SK-N-SH (cell line): ENCODE measurements at regions of chr7 and their contacts with region 1.

Region 1: DNA sequence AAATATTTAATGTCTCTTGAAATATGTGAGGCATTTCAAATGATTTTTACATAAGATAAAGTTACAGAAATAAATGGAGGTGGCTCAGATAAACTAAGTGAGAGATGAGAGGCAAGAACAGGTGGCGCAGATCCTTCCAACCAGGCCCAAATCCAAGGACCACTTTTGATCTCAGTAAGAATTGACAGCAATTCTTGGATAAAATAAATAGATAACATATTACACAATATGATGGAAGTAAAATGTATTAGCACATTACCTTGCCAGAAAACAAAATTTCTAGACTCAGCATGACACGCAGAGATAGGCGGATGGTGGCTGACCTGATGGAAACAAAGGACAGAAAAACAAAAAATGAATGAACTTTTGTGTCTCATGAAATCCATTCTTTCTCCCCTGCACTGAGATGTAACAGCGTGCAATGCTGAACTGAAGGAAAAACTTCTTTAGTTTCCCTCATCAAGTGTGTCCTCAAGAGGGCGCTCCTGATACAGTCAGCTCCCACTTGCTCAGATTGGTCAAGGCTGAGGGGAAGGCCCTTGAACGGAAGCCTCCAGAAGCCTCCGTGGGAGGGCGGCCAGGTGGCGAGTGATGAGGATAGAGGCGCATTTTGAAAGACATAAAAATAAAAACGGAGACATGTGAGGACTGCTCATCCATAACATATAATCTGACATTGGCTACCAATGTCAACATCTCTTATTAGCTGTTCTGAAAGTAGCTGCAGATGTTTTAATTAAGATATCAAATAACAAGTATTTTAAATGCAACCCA is 62.8 kb upstream of the GSDME start:
- DNase-seq: peak; percentile 77
- H3K4me3 ChIP-seq: no peak overlapping the region
- H3K27ac ChIP-seq: peak overlapping the region; percentile 70 to 93; a peak in 3 of 4 replicates
- H3K4me1 ChIP-seq: peaks cover 5 to 18% of the 10 kb centered on the region in 2 experiments; a peak in 3 of 4 replicates
- H3K27me3 ChIP-seq: no peaks in the 10 kb centered on the region
- CTCF ChIP-seq: peak; percentile 99
- EP300 ChIP-seq: peak in 1 of 2 experiments; percentile 19; a peak in 1 of 4 replicates
- RAD21 ChIP-seq: peak; percentile 98

Region 2: DNA sequence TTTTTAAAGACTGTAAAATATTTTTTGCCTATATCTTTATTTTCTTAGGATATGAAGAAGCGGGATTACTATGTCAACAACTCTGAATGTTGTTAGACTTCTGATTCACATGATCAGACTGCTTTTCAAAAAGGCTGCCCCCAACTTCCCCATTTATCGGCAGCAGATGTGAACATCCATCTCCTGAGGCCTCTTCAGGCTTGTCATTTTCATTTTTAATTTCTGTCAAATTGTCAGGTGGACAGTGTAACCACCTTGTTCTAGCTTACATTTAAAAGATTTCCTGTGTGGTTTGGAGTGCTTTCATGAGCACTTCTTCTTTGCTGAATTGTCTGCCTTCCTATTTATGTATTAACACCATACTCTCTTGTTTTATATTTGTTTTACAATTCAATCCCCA is 16.0 kb after region 1 on chr7:
- CTCF ChIA-PET with region 1: interaction called, 38 read pairs
- POLR2A ChIA-PET with region 1: no interaction called
- DNase-seq: no peak
- H3K4me3 ChIP-seq: no peak overlapping the region
- H3K27ac ChIP-seq: no peak overlapping the region
- H3K4me1 ChIP-seq: peaks cover 0 to 22% of the 10 kb centered on the region in 2 experiments; a peak in 3 of 4 replicates
- H3K27me3 ChIP-seq: no peaks in the 10 kb centered on the region
- CTCF ChIP-seq: no peak
- EP300 ChIP-seq: no peak
- RAD21 ChIP-seq: no peak

Region 3: GRCh38 chr7:24863626-24864025 is 43.5 kb after region 1 on chr7:
- CTCF ChIA-PET with region 1: interaction called, 10 read pairs
- POLR2A ChIA-PET with region 1: no interaction called
- DNase-seq: no peak
- H3K4me3 ChIP-seq: no peak overlapping the region
- H3K27ac ChIP-seq: no peak overlapping the region
- H3K4me1 ChIP-seq: no peaks in the 10 kb centered on the region; a peak in 1 of 4 replicates
- H3K27me3 ChIP-seq: no peaks in the 10 kb centered on the region
- CTCF ChIP-seq: no peak
- EP300 ChIP-seq: no peak
- RAD21 ChIP-seq: no peak

Region 4: DNA sequence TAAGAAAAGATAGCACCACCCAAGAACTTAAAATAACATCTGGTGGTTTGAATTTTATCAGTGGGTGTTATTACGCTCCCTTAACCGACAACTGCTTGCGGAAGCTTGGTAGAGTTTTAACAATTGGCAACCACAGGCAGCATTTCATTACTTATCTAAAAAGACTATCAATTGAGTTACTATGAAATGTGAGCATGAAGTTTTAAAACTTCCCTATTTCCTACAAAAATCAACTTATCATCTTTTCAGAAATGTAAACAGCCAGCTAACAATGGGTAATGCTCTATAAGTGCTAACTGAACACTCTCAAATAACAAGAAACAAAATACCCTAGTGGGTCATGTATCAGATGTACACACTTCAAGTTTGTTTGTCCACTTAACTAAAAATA is 91.1 kb after region 1 on chr7:
- CTCF ChIA-PET with region 1: interaction called, 11 read pairs
- POLR2A ChIA-PET with region 1: no interaction called
- DNase-seq: no peak
- H3K4me3 ChIP-seq: no peak overlapping the region
- H3K27ac ChIP-seq: peak overlapping the region in 1 of 2 experiments; percentile 6; a peak in 2 of 4 replicates
- H3K4me1 ChIP-seq: peaks cover 17 to 40% of the 10 kb centered on the region in 2 experiments
- H3K27me3 ChIP-seq: no peaks in the 10 kb centered on the region
- CTCF ChIP-seq: no peak
- EP300 ChIP-seq: no peak
- RAD21 ChIP-seq: no peak

Region 5: GRCh38 chr7:25069900-25070443 is 249.9 kb after region 1 on chr7:
- CTCF ChIA-PET with region 1: interaction called, 81 read pairs
- POLR2A ChIA-PET with region 1: no interaction called
- DNase-seq: peak; percentile 83
- H3K4me3 ChIP-seq: peak overlapping the region in 1 of 2 experiments; percentile 30; a peak in 1 of 4 replicates
- H3K27ac ChIP-seq: no peak overlapping the region
- H3K4me1 ChIP-seq: no peaks in the 10 kb centered on the region
- H3K27me3 ChIP-seq: no peaks in the 10 kb centered on the region
- CTCF ChIP-seq: peak; percentile 99
- EP300 ChIP-seq: no peak
- RAD21 ChIP-seq: peak; percentile 93